ENCODE measurements at regions of chr17 and their contacts with region 1.

Region 1: GRCh38 chr17:49556223-49556971 is 19.3 kb upstream of the NXPH3 start:
- DNase-seq: peak; percentile 66
- H3K4me3 ChIP-seq: no peak overlapping the region
- H3K27ac ChIP-seq: no peak overlapping the region
- H3K4me1 ChIP-seq: peaks cover 2% of the 10 kb centered on the region
- H3K27me3 ChIP-seq: no peaks in the 10 kb centered on the region
- CTCF ChIP-seq: peak; percentile 98 to 99
- POLR2A ChIP-seq: no peak

Region 2: DNA sequence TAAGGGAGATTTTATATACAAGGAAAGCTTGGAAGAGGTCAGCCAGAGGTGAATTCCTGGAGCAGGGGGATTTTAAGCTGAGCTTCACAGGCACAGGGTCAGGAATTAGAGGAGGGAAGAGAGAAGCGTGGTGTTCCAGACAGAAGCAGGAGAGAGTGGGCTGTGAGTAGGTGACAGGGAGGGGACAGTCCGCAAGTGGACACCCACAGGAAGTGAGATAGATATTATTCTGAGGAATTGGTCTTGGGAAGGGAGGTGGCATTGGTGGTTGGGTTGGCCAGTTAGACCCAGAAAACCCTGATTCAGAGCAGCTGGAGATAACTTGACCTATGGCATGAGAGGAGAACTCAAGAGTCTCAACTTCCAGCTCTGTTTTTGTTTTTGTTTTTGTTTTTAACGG is 156.4 kb before region 1 on chr17:
- CTCF ChIA-PET with region 1: interaction called, 23 read pairs
- POLR2A ChIA-PET with region 1: no interaction called
- dilution Hi-C with region 1: no loop called
- intact Hi-C with region 1: no loop called
- DNase-seq: no peak
- H3K4me3 ChIP-seq: no peak overlapping the region
- H3K27ac ChIP-seq: no peak overlapping the region
- H3K4me1 ChIP-seq: no peaks in the 10 kb centered on the region
- H3K27me3 ChIP-seq: no peaks in the 10 kb centered on the region
- CTCF ChIP-seq: no peak
- POLR2A ChIP-seq: no peak

Region 3: GRCh38 chr17:49414622-49415350 is 141.6 kb before region 1 on chr17 and contains the start of gene PHB1:
- CTCF ChIA-PET with region 1: interaction called, 116 read pairs
- POLR2A ChIA-PET with region 1: no interaction called
- dilution Hi-C with region 1: no loop called
- intact Hi-C with region 1: no loop called
- DNase-seq: peak; percentile 99
- H3K4me3 ChIP-seq: peak within 1 kb of the TSS; percentile 69 to 78 (median 76)
- H3K27ac ChIP-seq: no peak within 1 kb of the TSS
- H3K4me1 ChIP-seq: peaks cover 6% of the 10 kb centered on the region
- H3K27me3 ChIP-seq: no peaks in the 10 kb centered on the region
- CTCF ChIP-seq: no peak
- POLR2A ChIP-seq: no peak
- total RNA-seq, gene PHB1: 222 and 231 TPM in 2 replicates

Region 4: DNA sequence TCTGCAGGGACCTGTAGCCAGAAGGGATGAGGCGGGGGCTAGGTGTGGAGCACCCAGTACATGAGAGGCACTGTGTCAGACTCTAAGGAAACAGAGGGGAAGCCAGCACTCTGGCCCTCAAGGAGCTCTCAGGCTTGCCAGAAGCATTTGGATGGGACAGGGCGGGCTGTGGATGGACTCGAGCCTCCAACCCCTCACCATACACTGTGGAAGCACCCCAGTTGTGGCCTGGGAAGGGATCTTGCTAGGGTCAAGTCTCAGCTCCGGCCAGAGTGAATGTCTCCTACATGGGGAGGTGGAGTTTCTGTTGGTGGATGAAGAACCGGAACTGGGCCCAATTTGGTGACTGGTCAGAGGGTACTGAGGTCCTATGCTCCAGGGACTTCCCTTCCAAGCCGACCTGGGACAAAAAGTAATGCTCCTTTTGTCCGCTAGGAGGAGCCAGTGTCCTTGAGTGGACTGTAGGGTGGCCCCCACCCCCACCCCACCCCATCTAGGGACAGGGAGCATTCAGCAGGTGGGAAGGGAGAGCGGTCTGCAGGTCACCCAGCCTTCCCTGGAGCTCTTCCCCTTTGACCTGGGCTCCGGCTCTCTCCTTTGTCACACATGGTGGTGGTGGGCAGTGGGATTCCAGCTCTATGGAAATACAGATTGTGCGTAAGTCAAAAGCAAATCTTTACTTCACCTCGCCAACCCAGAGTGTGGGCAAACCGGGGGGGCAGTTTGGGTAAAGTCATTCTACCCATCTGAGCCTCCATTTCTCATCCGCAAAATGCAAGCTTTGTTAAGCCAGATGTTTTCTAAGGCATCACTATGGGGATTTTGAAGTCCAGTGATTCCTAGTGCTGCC is 121.4 kb before region 1 on chr17:
- CTCF ChIA-PET with region 1: interaction called, 188 read pairs
- POLR2A ChIA-PET with region 1: no interaction called
- dilution Hi-C with region 1: no loop called
- intact Hi-C with region 1: loop called (anchors 1 kb)
- DNase-seq: peak; percentile 42
- H3K4me3 ChIP-seq: no peak overlapping the region
- H3K27ac ChIP-seq: no peak overlapping the region
- H3K4me1 ChIP-seq: no peaks in the 10 kb centered on the region
- H3K27me3 ChIP-seq: peaks cover 22 to 24% of the 10 kb centered on the region in 2 experiments
- CTCF ChIP-seq: peak; percentile 27 to 72
- POLR2A ChIP-seq: no peak

Region 5: DNA sequence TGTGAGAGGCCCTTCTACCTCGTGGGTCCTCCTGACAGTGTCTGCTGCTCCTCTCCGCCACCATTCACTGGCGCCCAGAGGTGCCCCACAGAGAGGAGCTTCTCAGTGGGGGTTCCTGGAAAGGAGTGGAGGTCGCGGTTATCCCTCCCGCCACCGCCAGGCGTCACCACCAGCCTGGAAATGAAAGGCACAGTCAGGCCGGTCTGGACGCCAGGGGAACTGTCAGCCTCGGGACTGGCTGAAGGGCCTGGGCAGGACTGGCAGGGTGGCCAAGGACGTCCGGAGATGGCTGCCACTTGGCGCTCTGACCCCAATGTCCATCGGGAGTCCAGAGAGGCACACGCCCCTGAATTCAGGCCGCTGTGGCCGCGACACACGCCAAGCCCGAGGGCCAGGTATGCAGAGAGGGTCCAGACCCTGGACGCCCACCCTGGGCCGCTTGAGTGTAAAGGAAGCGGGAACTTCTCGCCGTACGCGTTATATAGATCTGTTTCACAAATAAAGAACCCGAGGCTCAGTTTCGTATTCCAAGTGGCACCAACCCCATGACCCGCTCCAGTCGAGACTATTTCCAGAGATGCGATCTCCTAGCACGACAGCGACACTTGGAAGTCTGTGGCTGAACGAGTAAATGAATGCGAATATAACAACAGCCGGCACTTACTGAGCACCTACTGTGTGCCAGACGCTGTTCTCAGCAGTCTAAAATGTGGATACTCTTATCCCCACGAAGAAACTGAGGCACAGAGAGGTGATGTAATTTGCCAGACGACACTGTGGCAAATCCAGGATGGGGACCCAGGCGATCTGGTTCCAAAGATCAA is 11.7 kb after region 1 on chr17:
- CTCF ChIA-PET with region 1: interaction called, 29 read pairs
- POLR2A ChIA-PET with region 1: no interaction called
- dilution Hi-C with region 1: no loop called
- intact Hi-C with region 1: no loop called
- DNase-seq: peak; percentile 79
- H3K4me3 ChIP-seq: peak overlapping the region; percentile 10 to 34 (median 25)
- H3K27ac ChIP-seq: no peak overlapping the region
- H3K4me1 ChIP-seq: peaks cover 5% of the 10 kb centered on the region
- H3K27me3 ChIP-seq: peaks cover 6 to 16% of the 10 kb centered on the region in 2 experiments
- CTCF ChIP-seq: peak; percentile 90 to 93
- POLR2A ChIP-seq: no peak

Region 6: GRCh38 chr17:49707608-49708514 is 151.5 kb after region 1 on chr17 and contains the start of gene SLC35B1:
- CTCF ChIA-PET with region 1: interaction called, 29 read pairs
- POLR2A ChIA-PET with region 1: no interaction called
- dilution Hi-C with region 1: no loop called
- intact Hi-C with region 1: no loop called
- DNase-seq: peak; percentile 100
- H3K4me3 ChIP-seq: peak within 1 kb of the TSS; percentile 84 to 93 (median 84)
- H3K27ac ChIP-seq: peak within 1 kb of the TSS; percentile 97
- H3K4me1 ChIP-seq: peaks cover 33% of the 10 kb centered on the region
- H3K27me3 ChIP-seq: no peaks in the 10 kb centered on the region
- CTCF ChIP-seq: peak; percentile 86 to 91
- POLR2A ChIP-seq: peak; percentile 66
- total RNA-seq, gene SLC35B1: 87.0 and 96.7 TPM in 2 replicates